Calu3 (cell line): ENCODE measurements at regions of chr12 and their contacts with region 1.

Region 1: DNA sequence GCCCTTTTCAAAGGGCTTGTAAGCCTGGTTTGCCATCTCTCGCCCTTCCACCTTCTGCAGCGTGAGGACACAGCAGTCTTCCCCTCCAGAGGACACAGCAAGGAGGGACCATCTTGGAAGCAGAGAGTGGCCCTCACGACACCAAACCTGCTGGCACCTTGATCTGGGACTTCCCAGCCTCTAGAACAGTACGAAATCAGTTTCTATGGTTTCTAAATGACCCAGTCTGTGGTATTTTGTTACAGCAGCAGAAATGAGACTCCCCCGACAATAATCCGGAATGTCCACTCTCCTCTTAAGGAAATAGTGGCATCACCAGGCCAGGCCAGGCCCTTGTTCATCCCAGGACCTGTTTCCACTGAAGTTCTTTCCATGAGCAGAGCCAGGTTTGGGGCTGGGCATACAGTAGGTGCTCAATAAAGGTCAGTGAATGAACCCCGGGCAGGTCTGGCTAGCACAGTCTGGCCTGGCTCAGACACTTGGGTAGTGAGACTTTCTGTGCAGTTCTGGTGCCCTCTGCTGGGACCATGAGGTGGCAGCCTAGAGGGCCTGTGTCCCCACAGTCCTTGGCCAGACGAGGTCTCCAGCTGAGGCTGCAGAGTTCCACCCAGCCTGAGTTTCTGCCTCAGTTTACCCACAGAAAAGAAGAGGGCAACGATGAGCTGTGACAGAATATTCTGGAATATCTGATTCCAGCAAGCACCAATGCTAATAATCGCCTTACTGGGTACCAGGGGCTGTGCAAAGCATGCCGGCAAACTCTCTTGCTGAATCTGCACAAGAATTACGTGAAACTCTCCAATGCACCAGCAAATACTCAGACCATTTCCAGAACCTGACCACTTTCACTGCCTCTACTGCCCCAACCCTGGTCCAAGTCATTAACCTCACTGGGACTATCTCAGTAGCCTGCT is 14.0 kb downstream of the ABCB9 start:
- DNase-seq: peak; percentile 86
- H3K4me3 Mint-ChIP-seq: no peak overlapping the region
- H3K27ac Mint-ChIP-seq: peak overlapping the region; percentile 60
- H3K4me1 Mint-ChIP-seq: peaks cover 33% of the 10 kb centered on the region
- H3K27me3 Mint-ChIP-seq: no peaks in the 10 kb centered on the region
- CTCF ChIP-seq: peak; percentile 87

Region 2: DNA sequence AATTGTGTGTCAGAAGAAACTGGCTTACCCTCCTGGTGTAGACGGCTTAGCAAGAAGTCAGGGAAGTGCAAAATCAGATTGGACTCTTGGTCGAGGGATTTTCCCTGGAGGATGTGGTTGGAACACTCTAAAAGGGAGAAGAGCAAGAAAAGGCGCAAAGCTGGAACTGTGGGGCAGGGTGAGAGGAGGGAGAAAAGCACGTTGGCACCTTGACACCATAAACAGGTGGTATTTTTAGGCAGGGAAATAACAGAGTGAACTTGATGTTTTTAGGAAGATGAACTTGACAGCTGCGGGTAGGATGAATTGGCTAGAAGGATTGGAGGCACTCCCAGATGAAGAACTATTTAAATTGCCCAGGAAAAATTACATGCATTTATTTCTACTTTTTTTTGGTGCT is 316.8 kb before region 1 on chr12:
- CTCF ChIA-PET with region 1: no interaction called
- intact Hi-C with region 1: loop called (anchors 5 kb)
- DNase-seq: no peak
- H3K4me3 Mint-ChIP-seq: no peak overlapping the region
- H3K27ac Mint-ChIP-seq: peak overlapping the region; percentile 69
- H3K4me1 Mint-ChIP-seq: peaks cover 7% of the 10 kb centered on the region
- H3K27me3 Mint-ChIP-seq: no peaks in the 10 kb centered on the region
- CTCF ChIP-seq: no peak

Region 3: DNA sequence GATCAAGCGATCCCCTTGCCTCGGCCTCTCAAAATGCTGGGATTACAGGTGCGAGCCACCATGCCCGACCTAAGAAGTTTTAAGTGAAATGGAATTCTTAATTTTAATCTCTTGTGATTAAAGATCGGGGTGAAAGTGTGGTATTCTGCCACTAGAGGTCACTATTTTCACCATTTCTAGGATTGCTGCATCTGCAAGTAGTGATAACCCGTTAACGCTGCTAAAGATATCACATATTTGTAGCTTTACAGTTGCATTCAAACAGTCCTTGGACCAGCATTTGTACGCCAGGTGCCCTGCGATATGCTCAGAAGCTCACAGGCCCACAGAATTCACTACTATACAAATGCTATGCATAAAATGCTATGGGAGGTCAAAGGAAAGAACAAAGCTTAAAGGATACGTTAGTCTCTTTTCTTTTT is 158.5 kb before region 1 on chr12:
- CTCF ChIA-PET with region 1: interaction called, 6 read pairs
- intact Hi-C with region 1: loop called (anchors 2 kb)
- DNase-seq: peak; percentile 18
- H3K4me3 Mint-ChIP-seq: no peak overlapping the region
- H3K27ac Mint-ChIP-seq: no peak overlapping the region
- H3K4me1 Mint-ChIP-seq: peaks cover 3% of the 10 kb centered on the region
- H3K27me3 Mint-ChIP-seq: no peaks in the 10 kb centered on the region
- CTCF ChIP-seq: peak; percentile 59

Region 4: GRCh38 chr12:122860346-122861090 is 91.7 kb before region 1 on chr12:
- CTCF ChIA-PET with region 1: interaction called, 18 read pairs
- intact Hi-C with region 1: loop called (anchors 1 kb)
- DNase-seq: peak; percentile 89
- H3K4me3 Mint-ChIP-seq: no peak overlapping the region
- H3K27ac Mint-ChIP-seq: peak overlapping the region; percentile 30
- H3K4me1 Mint-ChIP-seq: peaks cover 7% of the 10 kb centered on the region
- H3K27me3 Mint-ChIP-seq: no peaks in the 10 kb centered on the region
- CTCF ChIP-seq: peak; percentile 91

Region 5: DNA sequence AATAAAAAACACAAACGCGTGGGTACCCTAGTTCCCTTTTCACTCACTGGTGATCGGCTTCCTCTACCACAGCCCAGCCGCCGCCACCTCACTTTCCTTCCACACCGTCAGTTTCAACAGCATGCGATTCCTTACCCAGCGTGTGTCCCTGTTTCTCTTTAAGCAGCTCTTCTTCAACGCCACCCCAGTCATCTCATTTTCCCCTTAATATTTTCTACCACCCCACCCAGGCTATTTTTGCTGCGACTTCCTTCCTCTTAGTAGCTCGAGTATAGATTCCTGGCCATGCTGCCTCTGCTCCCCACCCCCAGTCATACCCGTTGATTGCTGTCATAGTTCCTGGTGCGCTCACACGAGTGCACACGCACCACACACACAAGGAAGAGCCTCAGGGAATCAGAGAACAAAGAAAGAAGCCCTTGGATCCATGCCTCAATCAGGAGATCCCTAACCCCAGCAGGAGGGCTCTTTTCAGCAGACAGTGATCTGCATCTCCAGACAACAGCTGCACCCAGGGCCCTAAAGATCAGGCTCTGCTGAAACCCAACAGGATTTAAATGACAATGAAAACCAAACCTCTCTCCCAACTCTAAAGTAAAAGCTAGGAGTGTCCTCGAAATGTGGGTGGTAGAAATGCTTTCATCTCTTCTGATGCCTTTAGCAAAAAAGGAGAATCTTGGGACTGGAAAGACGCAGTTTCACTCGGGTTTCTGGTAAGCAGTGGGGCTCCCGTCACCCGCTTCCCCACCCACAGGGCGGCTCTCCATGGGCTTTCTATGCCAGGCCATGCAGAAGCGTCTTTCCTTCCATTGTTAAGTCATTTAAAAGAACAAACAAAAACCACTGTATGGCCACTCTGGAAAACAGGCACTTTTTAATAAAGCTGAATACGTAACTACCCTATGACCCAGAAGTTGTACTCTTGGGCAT is 80.1 kb before region 1 on chr12:
- CTCF ChIA-PET with region 1: interaction called, 9 read pairs
- intact Hi-C with region 1: loop called (anchors 5 kb)
- DNase-seq: peak; percentile 87
- H3K4me3 Mint-ChIP-seq: peak overlapping the region; percentile 64
- H3K27ac Mint-ChIP-seq: peak overlapping the region; percentile 91
- H3K4me1 Mint-ChIP-seq: peaks cover 50% of the 10 kb centered on the region
- H3K27me3 Mint-ChIP-seq: no peaks in the 10 kb centered on the region
- CTCF ChIP-seq: no peak

Region 6: GRCh38 chr12:122888232-122888867 is 63.9 kb before region 1 on chr12:
- CTCF ChIA-PET with region 1: interaction called, 17 read pairs
- intact Hi-C with region 1: loop called (anchors 2 kb)
- DNase-seq: peak; percentile 91
- H3K4me3 Mint-ChIP-seq: peak overlapping the region; percentile 100
- H3K27ac Mint-ChIP-seq: peak overlapping the region; percentile 98
- H3K4me1 Mint-ChIP-seq: peaks cover 81% of the 10 kb centered on the region
- H3K27me3 Mint-ChIP-seq: no peaks in the 10 kb centered on the region
- CTCF ChIP-seq: no peak